Activated B cell treated with CpG ODN at 0.5 μM for 24 hours (primary cell): ENCODE measurements at regions of chr1 and their contacts with region 1.

Region 1: GRCh38 chr1:181676269-181676668 is 193.0 kb downstream of the CACNA1E start:
- DNase-seq: no peak
- ATAC-seq: no peak
- H3K4me3 Mint-ChIP-seq: no peak overlapping the region
- H3K27ac Mint-ChIP-seq: no peak overlapping the region
- H3K4me1 Mint-ChIP-seq: no peaks in the 10 kb centered on the region
- H3K27me3 Mint-ChIP-seq: peaks cover 12% of the 10 kb centered on the region
- CTCF ChIP-seq: no peak

Region 2: GRCh38 chr1:181704546-181704945 is 28.3 kb after region 1 on chr1:
- CTCF ChIA-PET with region 1: no interaction called
- POLR2A ChIA-PET with region 1: no interaction called
- intact Hi-C with region 1: no loop called
- DNase-seq: no peak
- ATAC-seq: no peak
- H3K4me3 Mint-ChIP-seq: no peak overlapping the region
- H3K27ac Mint-ChIP-seq: no peak overlapping the region
- H3K4me1 Mint-ChIP-seq: no peaks in the 10 kb centered on the region
- H3K27me3 Mint-ChIP-seq: no peaks in the 10 kb centered on the region
- CTCF ChIP-seq: no peak

Region 3: GRCh38 chr1:182054698-182055326 is 378.5 kb after region 1 on chr1:
- CTCF ChIA-PET with region 1: interaction called, 4 read pairs
- POLR2A ChIA-PET with region 1: no interaction called
- intact Hi-C with region 1: loop called (anchors 5 kb)
- DNase-seq: no peak
- ATAC-seq: peak; percentile 56
- H3K4me3 Mint-ChIP-seq: no peak overlapping the region
- H3K27ac Mint-ChIP-seq: no peak overlapping the region
- H3K4me1 Mint-ChIP-seq: no peaks in the 10 kb centered on the region
- H3K27me3 Mint-ChIP-seq: peaks cover 35% of the 10 kb centered on the region
- CTCF ChIP-seq: no peak